AG04449 (cell line): ENCODE measurements at regions of chr17 and their contacts with region 1.

Region 1: DNA sequence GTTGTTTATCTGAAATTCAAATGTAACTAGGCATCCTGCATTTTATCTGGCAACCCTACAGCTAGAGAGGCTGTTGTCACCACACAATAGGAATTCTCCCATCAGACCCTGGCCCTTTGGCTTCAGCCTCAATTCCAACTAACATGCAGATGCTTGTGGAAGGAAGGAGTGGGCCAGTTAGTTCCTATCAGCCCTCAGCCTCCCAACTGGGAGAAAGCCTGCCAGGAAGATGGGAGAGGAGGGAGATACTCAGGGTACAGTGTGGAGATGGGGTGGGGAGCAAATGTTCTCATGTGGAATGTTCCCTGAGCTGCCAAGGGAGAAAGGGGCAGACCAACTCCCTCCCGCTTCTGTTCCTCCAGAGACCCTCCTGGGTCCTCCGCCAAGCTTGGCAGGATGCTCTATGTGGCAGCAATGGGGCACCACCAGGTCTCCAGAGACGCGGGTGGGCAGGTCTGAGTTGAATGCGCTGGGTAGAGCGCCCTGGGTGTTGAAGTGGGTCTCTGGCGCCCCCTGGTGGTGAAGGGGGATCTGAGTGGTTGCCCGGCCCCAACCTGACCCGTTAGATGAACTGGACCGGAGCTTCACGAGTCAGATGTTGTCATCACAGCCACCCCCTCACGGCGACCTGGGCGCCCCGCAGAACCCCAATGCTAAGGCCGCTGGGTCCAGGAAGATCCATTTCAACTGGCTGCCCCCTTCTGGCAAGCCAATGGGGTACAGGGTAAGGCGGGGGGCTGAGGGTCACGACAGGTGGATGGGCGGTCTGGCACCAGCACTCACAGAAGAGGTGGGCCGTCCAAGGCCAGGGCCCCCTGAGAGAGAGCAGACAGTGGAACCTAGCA is 15.2 kb downstream of the GALK1 start:
- DNase-seq: no peak
- H3K4me3 ChIP-seq: no peak overlapping the region
- CTCF ChIP-seq: peak; percentile 86

Region 2: DNA sequence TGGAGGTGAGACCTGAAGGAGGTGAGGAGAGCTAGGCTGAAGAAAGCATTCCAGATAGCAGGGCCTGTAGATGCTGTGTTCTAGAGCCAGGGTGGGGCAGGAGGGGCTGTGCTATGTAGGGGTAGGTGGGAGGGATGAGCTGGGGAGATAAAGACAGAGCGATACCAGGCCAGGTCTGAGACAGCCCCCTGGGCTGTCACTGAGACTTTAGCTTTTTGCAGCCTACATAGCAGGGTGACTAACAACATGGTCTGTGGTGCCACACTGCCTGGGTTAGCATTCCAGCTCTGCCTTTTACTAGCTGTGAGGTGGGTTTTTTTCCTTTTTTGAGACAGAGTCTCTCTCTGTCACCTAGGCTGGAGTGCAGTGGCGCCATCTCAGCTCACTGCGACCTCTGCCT is 530.0 kb before region 1 on chr17:
- CTCF ChIA-PET with region 1: no interaction called
- POLR2A ChIA-PET with region 1: no interaction called
- DNase-seq: no peak
- H3K4me3 ChIP-seq: no peak overlapping the region
- CTCF ChIP-seq: no peak

Region 3: GRCh38 chr17:75589012-75589918 is 160.5 kb before region 1 on chr17:
- CTCF ChIA-PET with region 1: interaction called, 56 read pairs
- POLR2A ChIA-PET with region 1: no interaction called
- DNase-seq: no peak
- H3K4me3 ChIP-seq: peak overlapping the region; percentile 59
- CTCF ChIP-seq: peak; percentile 45

Region 4: DNA sequence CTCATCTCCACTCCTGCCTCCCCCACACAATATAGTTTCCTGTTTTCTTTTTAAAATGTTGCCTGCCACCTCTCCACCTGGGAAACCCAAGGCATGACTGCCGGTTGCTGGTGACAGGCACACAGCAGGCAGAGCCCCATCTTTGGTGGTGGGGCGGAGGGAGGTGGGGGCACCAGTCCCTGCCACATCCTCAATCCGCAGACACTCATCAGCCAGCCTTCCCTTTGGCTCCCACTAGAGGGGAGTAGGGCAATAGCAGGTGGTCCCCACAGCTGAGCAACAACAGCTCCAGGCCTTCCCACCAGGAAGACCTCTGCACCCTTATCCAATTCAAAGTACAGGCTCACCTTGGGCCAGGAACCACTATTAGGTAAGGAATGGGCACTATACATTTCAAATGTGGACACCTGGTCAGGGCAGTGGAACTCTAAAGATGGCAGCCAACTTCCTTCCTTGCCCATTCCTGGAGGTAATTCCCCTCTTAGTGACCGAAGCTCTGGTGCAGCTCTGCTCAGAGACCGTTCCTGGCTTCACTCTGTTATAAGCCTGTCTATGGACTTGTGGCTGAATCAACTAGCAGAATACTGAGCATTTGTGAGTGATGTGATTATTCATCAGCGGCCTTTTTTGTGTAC is 96.7 kb before region 1 on chr17:
- CTCF ChIA-PET with region 1: interaction called, 203 read pairs
- POLR2A ChIA-PET with region 1: no interaction called
- DNase-seq: no peak
- H3K4me3 ChIP-seq: no peak overlapping the region
- CTCF ChIP-seq: peak; percentile 78

Region 5: GRCh38 chr17:75703591-75703990 is 46.2 kb before region 1 on chr17:
- CTCF ChIA-PET with region 1: interaction called, 12 read pairs
- POLR2A ChIA-PET with region 1: no interaction called
- DNase-seq: no peak
- H3K4me3 ChIP-seq: no peak overlapping the region
- CTCF ChIP-seq: no peak

Region 6: GRCh38 chr17:75738218-75738802 is 11.5 kb before region 1 on chr17:
- CTCF ChIA-PET with region 1: interaction called, 174 read pairs
- POLR2A ChIA-PET with region 1: interaction called, 3 read pairs
- DNase-seq: no peak
- H3K4me3 ChIP-seq: no peak overlapping the region
- CTCF ChIP-seq: no peak

Region 7: DNA sequence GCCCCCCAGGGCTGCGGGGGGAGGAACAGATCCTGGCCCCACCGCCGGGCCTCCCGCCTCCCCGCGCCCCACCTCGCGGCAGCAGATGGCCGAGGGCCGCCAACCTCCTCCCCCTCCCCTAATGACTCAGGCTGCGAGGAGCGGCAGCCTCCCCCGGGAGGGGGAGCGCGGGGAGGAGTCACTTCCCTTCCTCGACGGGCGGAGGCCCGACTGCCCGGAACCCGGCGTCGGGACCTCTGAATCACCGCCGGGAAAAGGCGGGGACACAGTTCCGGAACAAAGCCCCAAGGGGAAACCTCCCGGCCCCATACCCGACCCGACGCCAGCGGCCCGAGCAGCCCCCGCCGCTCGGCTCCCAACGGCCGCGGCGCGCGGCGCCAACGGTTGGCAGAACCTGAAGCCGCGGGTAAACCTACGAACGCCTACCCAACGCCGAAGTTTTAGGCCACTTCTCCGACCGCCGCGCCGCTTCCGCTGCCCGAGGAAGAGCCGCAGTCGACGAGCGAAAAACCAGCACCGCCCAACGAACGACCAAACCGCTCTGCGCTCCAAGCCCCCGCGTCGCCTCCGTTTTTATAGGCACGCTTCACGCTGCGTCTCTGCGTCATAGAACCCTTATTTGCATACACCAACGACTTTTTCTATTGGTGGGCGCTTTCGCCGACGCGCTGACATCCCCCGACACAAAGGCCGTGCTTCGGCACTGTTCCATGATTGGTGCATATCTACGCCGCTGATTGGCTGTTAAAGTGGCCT is 29.6 kb after region 1 on chr17:
- CTCF ChIA-PET with region 1: interaction called, 11 read pairs
- POLR2A ChIA-PET with region 1: interaction called, 11 read pairs
- DNase-seq: peak; percentile 98
- H3K4me3 ChIP-seq: peak overlapping the region; percentile 93
- CTCF ChIP-seq: no peak

Region 8: GRCh38 chr17:75896415-75897159 is 146.8 kb after region 1 on chr17 and contains the start of gene TRIM65:
- CTCF ChIA-PET with region 1: interaction called, 11 read pairs
- POLR2A ChIA-PET with region 1: interaction called, 4 read pairs
- DNase-seq: no peak
- H3K4me3 ChIP-seq: peak within 1 kb of the TSS; percentile 84
- CTCF ChIP-seq: peak; percentile 65

Region 9: GRCh38 chr17:76027159-76027839 is 277.5 kb after region 1 on chr17 and contains the start of gene EVPL:
- CTCF ChIA-PET with region 1: no interaction called
- POLR2A ChIA-PET with region 1: no interaction called
- DNase-seq: no peak
- H3K4me3 ChIP-seq: no peak within 1 kb of the TSS
- CTCF ChIP-seq: no peak